ENCODE measurements at regions of chr1 and their contacts with region 1.

Region 1: GRCh38 chr1:66478116-66478515 is 55.8 kb upstream of the SGIP1 start:
- DNase-seq: peak; percentile 92
- H3K4me3 ChIP-seq: no peak overlapping the region
- CTCF ChIP-seq: no peak

Region 2: DNA sequence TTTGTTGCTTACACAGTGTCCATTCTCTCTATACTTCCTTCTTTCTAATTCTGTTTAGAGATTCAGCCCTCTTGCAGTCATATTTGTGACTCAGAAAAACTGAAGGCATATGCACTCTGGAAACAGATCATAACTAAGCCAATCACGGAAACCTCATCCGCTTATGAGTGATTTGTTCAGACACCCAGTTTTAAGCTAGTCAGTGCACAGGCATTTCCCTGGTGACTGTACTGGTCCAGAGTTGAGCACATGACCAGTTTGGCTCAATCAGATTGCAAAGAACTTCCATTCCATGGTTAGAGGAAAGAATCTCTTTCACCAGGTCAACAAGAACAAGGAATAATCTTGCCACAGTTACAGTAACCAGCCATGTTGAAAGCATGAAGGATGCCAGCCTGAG is 13.3 kb before region 1 on chr1:
- CTCF ChIA-PET with region 1: interaction called, 19 read pairs
- POLR2A ChIA-PET with region 1: interaction called, 8 read pairs
- DNase-seq: peak; percentile 98
- H3K4me3 ChIP-seq: no peak overlapping the region
- CTCF ChIP-seq: no peak

Measured in AG04449 (cell line).